AG04450 (cell line): ENCODE measurements at regions of chr1 and their contacts with region 1.

Region 1: DNA sequence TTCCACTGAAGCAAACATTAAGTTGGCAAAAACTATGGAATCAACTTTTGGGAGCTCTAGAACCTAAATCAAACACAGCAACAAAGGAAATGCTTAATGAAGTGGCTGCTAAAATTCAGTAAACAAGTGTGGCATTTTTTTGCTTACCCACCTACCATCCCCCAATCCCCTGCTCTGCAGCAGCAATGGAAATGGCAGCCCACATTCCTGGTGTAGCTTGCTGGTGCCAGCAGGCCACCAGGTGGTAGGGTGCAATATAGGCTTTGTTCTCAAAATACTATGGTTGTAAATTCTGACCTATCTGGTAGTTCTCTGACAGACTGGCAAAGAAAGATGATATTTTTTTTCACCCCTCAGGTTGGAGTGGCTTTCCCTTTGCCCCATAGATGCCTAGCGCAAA is 42.8 kb downstream of the SHCBP1L start:
- DNase-seq: no peak
- H3K4me3 ChIP-seq: no peak overlapping the region
- H3K27ac ChIP-seq: no peak overlapping the region
- H3K27me3 ChIP-seq: no peaks in the 10 kb centered on the region
- CTCF ChIP-seq: no peak

Region 2: GRCh38 chr1:182761396-182762395 is 148.4 kb before region 1 on chr1:
- CTCF ChIA-PET with region 1: no interaction called
- POLR2A ChIA-PET with region 1: no interaction called
- DNase-seq: no peak
- H3K4me3 ChIP-seq: no peak overlapping the region
- H3K27ac ChIP-seq: no peak overlapping the region
- H3K27me3 ChIP-seq: peaks cover 4% of the 10 kb centered on the region
- CTCF ChIP-seq: no peak

Region 3: GRCh38 chr1:182927693-182928433 is 17.7 kb after region 1 on chr1:
- CTCF ChIA-PET with region 1: interaction called, 10 read pairs
- POLR2A ChIA-PET with region 1: no interaction called
- DNase-seq: no peak
- H3K4me3 ChIP-seq: no peak overlapping the region
- H3K27ac ChIP-seq: no peak overlapping the region
- H3K27me3 ChIP-seq: peaks cover 5% of the 10 kb centered on the region
- CTCF ChIP-seq: no peak

Region 4: GRCh38 chr1:183058851-183059502 is 148.8 kb after region 1 on chr1:
- CTCF ChIA-PET with region 1: no interaction called
- POLR2A ChIA-PET with region 1: no interaction called
- DNase-seq: no peak
- H3K4me3 ChIP-seq: no peak overlapping the region
- H3K27ac ChIP-seq: no peak overlapping the region
- H3K27me3 ChIP-seq: no peaks in the 10 kb centered on the region
- CTCF ChIP-seq: no peak

Region 5: DNA sequence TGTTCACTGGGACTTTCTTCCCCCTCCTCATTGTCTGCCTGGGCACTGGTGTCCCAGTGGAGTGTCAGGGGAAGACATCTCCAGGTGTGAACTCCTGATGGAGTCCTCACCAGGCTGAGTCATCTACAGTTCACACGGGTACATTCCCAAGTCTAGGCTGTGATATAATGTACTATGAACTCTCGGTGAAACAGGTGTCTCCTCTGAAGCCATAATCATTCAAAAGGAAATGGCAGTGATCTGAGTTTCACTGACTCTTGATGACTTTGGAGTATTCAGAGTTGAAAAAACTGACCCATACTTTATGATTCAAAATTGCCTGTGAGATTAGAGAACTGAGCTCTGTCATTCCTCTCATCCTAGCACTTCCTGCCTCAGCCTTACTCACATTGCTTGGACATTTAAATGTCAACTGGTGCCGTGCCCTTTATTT is 285.0 kb after region 1 on chr1:
- CTCF ChIA-PET with region 1: no interaction called
- POLR2A ChIA-PET with region 1: no interaction called
- DNase-seq: no peak
- H3K4me3 ChIP-seq: no peak overlapping the region
- H3K27ac ChIP-seq: no peak overlapping the region
- H3K27me3 ChIP-seq: no peaks in the 10 kb centered on the region
- CTCF ChIP-seq: no peak